Astrocyte of the cerebellum (primary cell): ENCODE measurements at regions of chr6 and their contacts with region 1.

Region 1: GRCh38 chr6:16420715-16421461 is 182.5 kb downstream of the GMPR start:
- DNase-seq: peak; percentile 60
- H3K4me3 ChIP-seq: no peak overlapping the region
- CTCF ChIP-seq: no peak

Region 2: DNA sequence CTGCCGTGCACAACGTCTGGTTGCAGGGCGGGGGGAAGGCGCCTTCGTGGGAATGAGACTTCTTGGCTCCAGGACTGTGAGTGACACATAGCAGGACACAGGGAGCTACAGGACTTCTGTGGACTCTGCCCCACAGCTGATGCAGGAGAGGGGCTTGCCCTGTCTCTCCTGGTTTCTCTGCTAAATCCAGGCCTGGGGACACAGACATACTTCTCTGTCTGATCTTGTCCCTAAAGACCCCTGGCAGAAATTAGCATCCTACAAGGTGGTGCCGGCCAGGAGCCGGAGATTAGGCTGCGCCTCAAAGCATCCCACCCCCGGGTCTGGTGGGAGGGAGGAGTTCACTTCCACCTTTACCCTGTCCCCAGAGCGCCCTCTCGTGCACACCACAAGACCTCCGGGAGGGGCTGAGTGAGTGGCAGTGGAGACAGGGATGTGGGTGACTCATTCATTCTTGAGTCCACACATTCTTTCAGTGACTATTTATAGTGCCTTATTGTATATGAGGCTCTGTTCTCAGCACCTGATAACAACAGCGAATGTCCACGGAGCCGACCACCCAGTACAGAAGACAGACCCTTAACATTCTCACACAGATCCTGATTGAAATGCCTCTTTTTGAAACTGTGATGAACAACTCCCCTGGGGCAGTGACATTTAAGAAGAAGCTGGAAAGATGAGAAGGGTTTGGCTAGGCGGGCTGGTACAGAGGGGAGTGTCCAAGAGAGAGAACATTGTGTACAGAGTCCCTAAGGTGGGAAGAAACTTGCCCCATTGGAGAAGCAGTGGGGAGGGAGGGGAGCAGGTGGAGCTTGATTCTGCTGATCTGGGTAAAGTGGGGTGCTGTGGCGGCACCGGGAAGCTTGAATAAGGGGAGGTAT is 143.5 kb before region 1 on chr6:
- in situ Hi-C with region 1: loop called (anchors 5 kb)
- DNase-seq: peak; percentile 70
- H3K4me3 ChIP-seq: no peak overlapping the region
- CTCF ChIP-seq: peak; percentile 65

Region 3: GRCh38 chr6:17525637-17526036 is 1104.7 kb after region 1 on chr6:
- in situ Hi-C with region 1: no loop called
- DNase-seq: no peak
- H3K4me3 ChIP-seq: no peak overlapping the region
- CTCF ChIP-seq: no peak